ENCODE measurements at regions of chr14 and their contacts with region 1.

Region 1: DNA sequence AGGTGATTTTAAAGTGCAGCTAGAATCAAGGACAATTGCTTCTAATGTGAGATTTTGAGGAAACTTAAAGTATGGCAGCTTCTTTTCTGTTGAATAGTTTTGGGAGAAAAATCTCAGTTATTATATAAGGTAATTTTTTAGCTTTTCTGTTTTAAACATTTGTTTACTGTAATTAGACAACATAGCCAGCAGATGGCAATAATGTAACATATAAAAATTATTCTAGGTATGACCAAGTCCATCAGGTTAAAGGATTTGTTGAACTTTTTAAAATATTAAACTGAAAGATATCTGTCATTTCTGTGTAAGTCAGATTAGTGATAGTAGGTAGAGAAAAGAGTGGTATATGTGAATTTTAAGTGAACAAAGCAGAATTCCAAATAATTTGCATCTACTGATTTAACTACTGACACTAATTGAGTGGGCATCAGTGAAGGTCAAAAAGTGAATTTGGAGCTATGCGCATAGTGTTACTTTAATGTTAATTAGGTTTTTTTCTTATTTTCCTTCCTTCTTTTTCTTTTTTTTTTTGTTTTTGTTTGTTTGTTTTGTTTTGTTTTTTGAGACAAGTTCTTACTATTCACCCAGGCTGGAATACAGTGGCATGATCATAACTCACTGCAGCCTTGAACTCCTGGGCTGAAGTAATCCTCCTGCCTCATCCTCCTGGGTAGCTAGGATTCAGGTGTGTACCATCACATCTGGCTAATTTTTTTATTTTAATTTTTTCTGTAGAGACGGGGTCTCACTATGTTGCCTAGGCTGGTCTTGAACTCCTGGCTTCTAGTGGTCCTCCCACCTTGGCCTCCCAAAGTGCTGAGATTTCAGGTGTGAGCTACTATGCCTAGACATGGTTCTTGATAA is 18.6 kb downstream of the PRORP start:
- DNase-seq: no peak
- ATAC-seq: peak in 3 of 4 donors; percentile 47 to 70 (median 65)
- H3K4me3 ChIP-seq: no peak overlapping the region
- H3K27ac ChIP-seq: no peak overlapping the region
- H3K4me1 ChIP-seq: no peaks in the 10 kb centered on the region
- H3K27me3 ChIP-seq: no peaks in the 10 kb centered on the region
- CTCF ChIP-seq: peak in 3 of 4 donors; percentile 55 to 68 (median 58)
- POLR2A ChIP-seq: no peak

Region 2: DNA sequence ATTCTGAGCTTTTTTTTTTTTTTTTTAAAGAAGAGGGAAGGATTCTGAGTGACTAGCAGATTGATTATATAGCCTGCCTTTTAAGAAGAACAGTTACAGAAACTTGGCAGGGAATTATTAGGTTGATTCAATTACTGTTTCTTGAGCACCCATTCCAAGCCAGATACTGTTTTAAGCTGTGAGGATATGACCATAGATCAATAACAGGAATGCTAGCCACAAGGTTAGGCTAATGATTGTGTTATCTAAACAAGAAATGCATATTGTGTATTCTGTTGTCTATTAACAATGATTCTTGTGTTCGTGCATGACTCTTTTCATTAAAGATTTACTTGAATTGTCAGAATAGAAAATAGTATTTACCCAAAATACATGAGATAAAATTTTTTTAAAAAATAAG is 48.5 kb after region 1 on chr14:
- intact Hi-C with region 1: no loop called
- DNase-seq: no peak
- ATAC-seq: peak in 2 of 4 donors; percentile 30 to 36
- H3K4me3 ChIP-seq: no peak overlapping the region
- H3K27ac ChIP-seq: no peak overlapping the region
- H3K4me1 ChIP-seq: no peaks in the 10 kb centered on the region
- H3K27me3 ChIP-seq: no peaks in the 10 kb centered on the region
- CTCF ChIP-seq: no peak
- POLR2A ChIP-seq: no peak

Region 3: GRCh38 chr14:35414365-35414764 is 273.4 kb after region 1 on chr14:
- intact Hi-C with region 1: loop called in 1 of 2 experiments (anchors 5 kb)
- DNase-seq: no peak
- ATAC-seq: peak; percentile 44 to 66 (median 45)
- H3K4me3 ChIP-seq: no peak overlapping the region
- H3K27ac ChIP-seq: peak overlapping the region in 1 of 3 donors; percentile 17
- H3K4me1 ChIP-seq: no peaks in the 10 kb centered on the region
- H3K27me3 ChIP-seq: no peaks in the 10 kb centered on the region
- CTCF ChIP-seq: no peak
- POLR2A ChIP-seq: no peak